Activated CD8-positive, alpha-beta memory T cell treated with anti-CD3 and anti-CD28 coated beads, Interleukin-2, amount 10 ng/mL, durations not matched to agents 7 days and 5 days (primary cell): ENCODE measurements at regions of chr16 and their contacts with region 1.

Region 1: DNA sequence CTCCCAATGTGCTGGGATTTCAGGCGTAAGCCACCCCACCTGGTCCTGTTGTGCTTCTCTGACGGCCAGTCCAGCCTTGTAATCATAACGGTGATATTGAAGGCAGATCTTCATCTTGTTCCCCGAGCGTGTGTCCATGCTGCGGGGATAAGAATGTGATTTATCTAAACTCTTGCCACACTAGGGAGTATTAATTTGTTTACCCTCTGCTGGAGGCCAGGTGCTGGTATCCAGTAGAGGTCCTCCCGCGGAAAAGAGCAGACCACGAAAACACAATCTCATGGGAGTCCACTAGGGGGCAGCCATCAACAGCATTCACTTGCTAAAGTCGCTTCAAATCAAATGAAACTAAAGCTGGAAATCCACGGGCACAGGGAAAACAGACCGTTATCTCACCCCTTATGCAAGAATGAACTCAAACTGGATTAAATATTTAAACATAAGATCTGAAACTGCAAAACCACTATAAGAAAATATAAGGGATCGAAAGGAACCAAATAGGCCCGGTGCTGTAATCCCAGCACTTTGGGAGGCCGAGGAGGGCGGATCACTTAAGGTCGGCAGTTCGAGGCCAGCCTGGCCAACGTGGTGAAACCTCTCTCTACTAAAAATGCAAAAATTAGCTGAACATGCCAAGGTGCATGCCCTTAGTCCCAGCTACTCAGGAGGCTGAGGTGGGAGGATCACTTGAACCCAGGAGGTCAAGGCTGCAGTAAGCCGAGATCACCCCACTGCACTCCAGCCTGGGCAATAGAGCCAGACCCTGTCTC is 22.3 kb upstream of the RBBP6 start:
- DNase-seq: peak; percentile 83
- ATAC-seq: peak; percentile 78
- H3K4me3 Mint-ChIP-seq: peak overlapping the region; percentile 35
- H3K27ac Mint-ChIP-seq: no peak overlapping the region
- H3K4me1 Mint-ChIP-seq: peaks cover 12% of the 10 kb centered on the region
- H3K27me3 Mint-ChIP-seq: peaks cover 6% of the 10 kb centered on the region

Region 2: DNA sequence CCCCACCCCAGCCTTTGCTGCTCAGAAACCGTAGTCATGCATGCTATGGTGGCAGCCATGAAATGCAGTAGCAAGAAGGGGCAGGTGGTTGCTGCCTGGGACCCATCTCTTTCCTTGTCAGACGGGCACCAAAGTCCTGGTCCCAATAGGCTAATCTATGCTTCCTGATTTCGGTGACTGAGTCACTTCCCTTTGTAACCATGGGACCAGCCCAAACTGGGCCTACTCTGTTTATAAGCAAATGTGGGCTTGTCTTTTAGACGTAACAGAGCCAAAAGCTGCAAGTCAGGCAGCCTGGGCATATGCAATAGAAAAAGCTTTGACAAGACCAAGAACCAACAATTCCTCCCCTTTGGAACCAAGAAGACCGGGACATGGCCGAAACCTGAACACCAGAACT is 76.8 kb before region 1 on chr16:
- CTCF ChIA-PET with region 1: no interaction called
- DNase-seq: no peak
- ATAC-seq: no peak
- H3K4me3 Mint-ChIP-seq: no peak overlapping the region
- H3K27ac Mint-ChIP-seq: no peak overlapping the region
- H3K4me1 Mint-ChIP-seq: no peaks in the 10 kb centered on the region
- H3K27me3 Mint-ChIP-seq: peaks cover 11% of the 10 kb centered on the region

Region 3: DNA sequence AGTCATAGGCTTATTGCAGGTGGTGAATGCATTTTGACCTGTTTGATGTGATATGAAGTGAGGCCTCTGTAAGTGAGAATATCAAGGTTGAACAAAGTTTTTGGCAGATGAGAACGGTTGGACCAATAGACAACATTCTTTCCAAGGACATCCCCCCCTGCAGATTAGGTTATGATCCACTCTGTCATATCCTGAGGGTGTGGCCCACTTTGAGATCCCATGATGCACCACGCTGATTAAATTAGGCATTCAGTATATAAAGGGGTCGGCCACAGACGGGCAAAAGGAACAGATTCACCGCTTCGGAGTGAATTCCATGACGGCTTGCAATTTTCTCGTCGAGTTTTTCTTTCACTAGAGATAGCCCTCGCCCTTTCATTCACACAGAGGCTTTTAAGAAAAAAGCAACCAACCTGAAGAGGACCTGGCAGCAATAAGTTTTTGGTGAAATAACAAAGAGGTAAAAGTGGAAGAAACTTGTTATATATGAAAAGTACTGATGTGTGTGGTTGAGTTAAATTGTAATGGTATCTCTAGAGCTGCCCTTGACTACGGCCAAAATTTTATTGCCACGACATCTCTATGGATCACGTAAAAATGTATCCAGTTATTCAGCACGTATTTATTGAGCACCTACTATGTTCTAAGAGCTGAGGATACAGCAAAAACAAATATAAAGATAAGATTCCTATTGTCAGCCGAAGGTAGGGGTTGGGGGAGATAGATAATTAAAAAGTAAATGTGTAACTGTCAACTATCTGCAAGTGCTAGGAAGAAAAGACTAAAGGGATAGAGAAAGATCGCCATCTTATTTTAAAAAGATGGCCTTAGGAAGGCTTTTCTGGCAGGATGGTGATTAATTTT is 20.6 kb after region 1 on chr16:
- CTCF ChIA-PET with region 1: interaction called, 12 read pairs
- DNase-seq: no peak
- ATAC-seq: no peak
- H3K4me3 Mint-ChIP-seq: no peak overlapping the region
- H3K27ac Mint-ChIP-seq: peak overlapping the region; percentile 28
- H3K4me1 Mint-ChIP-seq: peaks cover 18% of the 10 kb centered on the region
- H3K27me3 Mint-ChIP-seq: no peaks in the 10 kb centered on the region